Activated B cell treated with CpG ODN at 0.5 μM for 24 hours (primary cell): ENCODE measurements at regions of chr10 and their contacts with region 1.

Region 1: GRCh38 chr10:48343921-48344598 is 37.6 kb downstream of the MAPK8 start:
- DNase-seq: no peak
- ATAC-seq: no peak
- H3K4me3 Mint-ChIP-seq: no peak overlapping the region
- H3K27ac Mint-ChIP-seq: no peak overlapping the region
- H3K4me1 Mint-ChIP-seq: no peaks in the 10 kb centered on the region
- H3K27me3 Mint-ChIP-seq: no peaks in the 10 kb centered on the region
- CTCF ChIP-seq: no peak

Region 2: GRCh38 chr10:48330269-48330668 is 13.8 kb before region 1 on chr10:
- CTCF ChIA-PET with region 1: no interaction called
- POLR2A ChIA-PET with region 1: no interaction called
- intact Hi-C with region 1: loop called (anchors 2 kb)
- DNase-seq: no peak
- ATAC-seq: no peak
- H3K4me3 Mint-ChIP-seq: no peak overlapping the region
- H3K27ac Mint-ChIP-seq: no peak overlapping the region
- H3K4me1 Mint-ChIP-seq: no peaks in the 10 kb centered on the region
- H3K27me3 Mint-ChIP-seq: no peaks in the 10 kb centered on the region
- CTCF ChIP-seq: no peak

Region 3: GRCh38 chr10:48456361-48456804 is 112.3 kb after region 1 on chr10:
- CTCF ChIA-PET with region 1: no interaction called
- POLR2A ChIA-PET with region 1: no interaction called
- intact Hi-C with region 1: no loop called
- DNase-seq: peak; percentile 15
- ATAC-seq: peak; percentile 37
- H3K4me3 Mint-ChIP-seq: no peak overlapping the region
- H3K27ac Mint-ChIP-seq: no peak overlapping the region
- H3K4me1 Mint-ChIP-seq: peaks cover 10% of the 10 kb centered on the region
- H3K27me3 Mint-ChIP-seq: no peaks in the 10 kb centered on the region
- CTCF ChIP-seq: no peak